T-cell (primary cell): ENCODE measurements at regions of chr6 and their contacts with region 1.

Region 1: GRCh38 chr6:52389626-52390360 is 27.8 kb downstream of the PAQR8 start:
- DNase-seq: peak; percentile 22 to 77 (median 57)
- ATAC-seq: peak; percentile 48 to 69 (median 64)
- H3K4me3 ChIP-seq: peak overlapping the region; percentile 25 to 29
- H3K4me3 Mint-ChIP-seq: peak overlapping the region; percentile 68 to 81 (median 81)
- H3K27ac ChIP-seq: peak overlapping the region; percentile 89
- H3K27ac Mint-ChIP-seq: peak overlapping the region; percentile 96 to 98
- H3K4me1 ChIP-seq: peaks cover 50 to 65% of the 10 kb centered on the region in 2 experiments
- H3K4me1 Mint-ChIP-seq: peaks cover 85 to 96% (median 92%) of the 10 kb centered on the region in 3 donors
- H3K27me3 ChIP-seq: no peaks in the 10 kb centered on the region
- H3K27me3 Mint-ChIP-seq: no peaks in the 10 kb centered on the region

Region 2: GRCh38 chr6:52304983-52305390 is 84.8 kb before region 1 on chr6:
- CTCF ChIA-PET with region 1: interaction called in 1 of 2 experiments, 10 read pairs
- POLR2A ChIA-PET with region 1: no interaction called
- DNase-seq: peak in 1 of 35 experiments; percentile 39
- ATAC-seq: peak in 2 of 4 experiments; percentile 32 to 34
- H3K4me3 ChIP-seq: no peak overlapping the region
- H3K4me3 Mint-ChIP-seq: peak overlapping the region; percentile 51 to 65 (median 54)
- H3K27ac ChIP-seq: peak overlapping the region; percentile 86
- H3K27ac Mint-ChIP-seq: peak overlapping the region; percentile 95
- H3K4me1 ChIP-seq: peaks cover 40 to 66% of the 10 kb centered on the region in 2 experiments
- H3K4me1 Mint-ChIP-seq: peaks cover 76 to 87% (median 80%) of the 10 kb centered on the region in 3 donors
- H3K27me3 ChIP-seq: no peaks in the 10 kb centered on the region
- H3K27me3 Mint-ChIP-seq: no peaks in the 10 kb centered on the region

Region 3: DNA sequence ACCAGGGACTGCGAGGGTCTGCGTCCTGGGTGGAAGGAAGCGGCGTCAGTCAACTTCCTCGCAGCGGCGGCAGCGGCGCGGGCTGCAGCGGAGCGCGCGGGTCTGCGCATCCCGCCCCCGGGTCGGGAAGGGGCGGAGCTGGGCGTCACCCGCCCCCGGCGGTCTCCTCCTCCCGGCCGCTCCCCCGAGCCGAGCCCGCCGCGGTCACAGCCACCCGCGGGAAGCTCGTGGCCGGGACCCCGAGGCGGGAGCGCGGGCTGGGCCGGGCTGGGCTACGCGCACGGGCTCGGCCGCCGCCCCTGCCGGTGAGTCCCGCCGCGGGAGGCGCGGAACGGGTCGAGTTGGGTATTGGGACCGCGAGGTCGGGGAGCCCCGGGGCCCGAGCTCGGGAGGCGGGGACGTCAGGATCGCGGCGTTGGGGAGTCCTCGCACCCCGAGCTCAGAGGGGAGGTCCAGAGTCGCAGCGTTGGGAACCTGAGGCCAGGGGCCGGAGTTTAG is 27.8 kb before region 1 on chr6 and contains the start of gene PAQR8:
- CTCF ChIA-PET with region 1: interaction called, 8 to 27 read pairs
- POLR2A ChIA-PET with region 1: interaction called, 4 to 8 read pairs
- DNase-seq: peak; percentile 60 to 91 (median 78)
- ATAC-seq: peak; percentile 91 to 96 (median 93)
- H3K4me3 ChIP-seq: peak within 1 kb of the TSS; percentile 93 to 98
- H3K4me3 Mint-ChIP-seq: peak within 1 kb of the TSS; percentile 94 to 97 (median 95)
- H3K27ac ChIP-seq: peak within 1 kb of the TSS; percentile 94
- H3K27ac Mint-ChIP-seq: peak within 1 kb of the TSS; percentile 94
- H3K4me1 ChIP-seq: peaks cover 15 to 21% of the 10 kb centered on the region in 2 experiments
- H3K4me1 Mint-ChIP-seq: peaks cover 42 to 49% (median 46%) of the 10 kb centered on the region in 3 donors
- H3K27me3 ChIP-seq: no peaks in the 10 kb centered on the region
- H3K27me3 Mint-ChIP-seq: no peaks in the 10 kb centered on the region
- total RNA-seq, gene PAQR8: 12.0 to 35.2 (median 30.2) TPM

Region 4: DNA sequence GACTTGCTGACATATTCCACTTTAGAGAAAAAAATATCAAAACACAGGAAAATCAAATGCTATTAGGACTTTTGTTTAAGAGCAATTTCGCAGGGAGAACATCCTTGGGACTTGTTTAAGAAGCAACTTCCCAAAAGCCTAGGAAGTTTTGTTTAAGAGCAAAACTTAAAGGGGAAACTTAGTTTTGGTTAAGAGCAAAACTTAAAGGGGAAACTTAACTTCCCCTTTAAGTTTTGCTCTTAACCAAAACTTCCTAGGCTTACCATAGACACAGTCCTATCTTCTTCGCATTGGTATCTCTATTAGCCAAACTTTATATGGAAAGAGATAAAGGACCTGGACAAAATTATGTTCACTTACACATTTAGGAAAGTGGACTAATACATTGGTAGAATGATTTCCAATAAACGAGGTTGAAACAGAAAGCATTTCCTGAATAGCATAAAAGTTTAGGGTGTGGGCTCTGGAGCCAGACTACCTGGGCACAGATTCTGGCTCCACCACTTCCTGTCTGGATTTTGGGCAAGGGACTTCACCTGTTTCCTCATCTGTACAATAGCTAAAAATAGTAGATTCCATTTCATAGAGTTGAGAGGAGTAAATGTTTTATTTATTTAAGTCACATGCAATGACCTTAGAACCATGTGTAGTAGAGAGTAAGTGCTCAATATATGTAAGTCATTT is 12.1 kb before region 1 on chr6:
- CTCF ChIA-PET with region 1: interaction called, 4 to 10 read pairs
- POLR2A ChIA-PET with region 1: interaction called in 1 of 2 experiments, 6 read pairs
- DNase-seq: no peak
- ATAC-seq: peak in 3 of 4 experiments; percentile 14 to 53 (median 28)
- H3K4me3 ChIP-seq: no peak overlapping the region
- H3K4me3 Mint-ChIP-seq: peak overlapping the region; percentile 32 to 54 (median 52)
- H3K27ac ChIP-seq: no peak overlapping the region
- H3K27ac Mint-ChIP-seq: peak overlapping the region; percentile 86 to 93
- H3K4me1 ChIP-seq: peaks cover 35 to 47% of the 10 kb centered on the region in 2 experiments
- H3K4me1 Mint-ChIP-seq: peaks cover 77 to 80% (median 79%) of the 10 kb centered on the region in 3 donors
- H3K27me3 ChIP-seq: no peaks in the 10 kb centered on the region
- H3K27me3 Mint-ChIP-seq: no peaks in the 10 kb centered on the region

Region 5: DNA sequence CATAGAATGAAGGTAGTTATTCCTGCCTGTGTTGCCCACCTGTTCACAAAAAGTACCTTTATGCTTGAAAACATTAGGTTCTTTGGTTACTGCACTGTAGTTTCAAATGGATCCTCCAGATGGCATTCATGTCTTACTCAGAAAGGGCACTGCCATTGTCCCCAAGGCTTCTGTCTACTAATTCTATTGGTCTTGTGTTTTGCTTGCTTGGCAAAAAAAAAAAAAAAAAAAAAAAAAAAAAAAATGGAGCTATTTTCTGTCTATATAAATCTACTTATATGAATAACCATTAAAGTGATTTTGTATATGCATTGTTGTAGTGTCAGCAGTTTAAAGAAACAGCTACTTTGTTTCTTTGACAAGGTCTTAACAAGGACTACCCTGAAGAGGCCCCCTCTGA is 17.7 kb after region 1 on chr6:
- CTCF ChIA-PET with region 1: interaction called, 10 to 88 read pairs
- POLR2A ChIA-PET with region 1: interaction called, 3 to 6 read pairs
- DNase-seq: peak in 3 of 35 experiments; percentile 22 to 63 (median 23)
- ATAC-seq: peak; percentile 61 to 86 (median 73)
- H3K4me3 ChIP-seq: no peak overlapping the region
- H3K4me3 Mint-ChIP-seq: no peak overlapping the region
- H3K27ac ChIP-seq: no peak overlapping the region
- H3K27ac Mint-ChIP-seq: peak overlapping the region; percentile 46 to 66
- H3K4me1 ChIP-seq: peaks cover 0 to 11% of the 10 kb centered on the region in 2 experiments
- H3K4me1 Mint-ChIP-seq: peaks cover 29 to 36% (median 36%) of the 10 kb centered on the region in 3 donors
- H3K27me3 ChIP-seq: no peaks in the 10 kb centered on the region
- H3K27me3 Mint-ChIP-seq: no peaks in the 10 kb centered on the region

Region 6: DNA sequence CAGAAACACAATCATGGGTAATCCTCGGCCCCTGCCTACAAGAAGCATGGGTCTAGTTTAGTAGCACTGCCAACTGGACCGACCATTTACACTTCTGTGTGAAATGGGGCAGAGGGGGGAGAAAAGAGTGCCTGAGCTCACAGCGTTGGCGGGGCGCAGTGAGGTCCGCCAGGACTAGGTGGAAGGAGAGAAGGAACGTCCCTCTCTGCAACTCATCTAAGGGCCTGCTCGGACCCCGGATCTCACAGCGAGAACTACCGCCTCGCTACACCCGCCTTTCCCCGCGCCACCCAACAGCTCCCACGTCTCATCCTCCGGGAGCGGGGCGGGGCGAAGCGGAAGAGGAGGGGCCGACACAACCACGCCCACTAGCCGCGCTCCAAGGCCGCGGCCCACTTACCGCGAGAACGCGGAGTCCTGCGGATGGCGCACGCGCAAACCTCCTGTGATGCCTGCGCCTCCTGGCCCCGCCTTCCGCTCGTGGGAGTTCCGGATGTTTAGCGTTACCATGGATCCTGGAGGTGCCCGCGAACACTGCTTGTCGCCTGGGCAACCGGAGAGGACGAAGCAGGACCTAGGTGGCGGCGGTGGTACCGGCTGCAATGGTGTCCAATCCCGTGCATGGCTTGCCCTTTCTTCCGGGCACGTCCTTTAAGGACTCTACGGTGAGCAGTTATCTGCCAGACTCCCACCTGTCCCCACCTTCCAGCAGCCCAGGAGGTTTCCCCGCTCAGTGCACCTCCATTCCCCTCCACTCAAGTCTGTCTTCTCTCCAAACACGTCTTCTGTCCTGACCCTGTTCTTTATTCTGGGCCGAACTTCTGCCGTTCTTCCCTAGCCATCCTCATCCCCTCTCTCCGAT is 30.2 kb after region 1 on chr6 and contains the start of gene EFHC1:
- CTCF ChIA-PET with region 1: interaction called, 10 to 51 read pairs
- POLR2A ChIA-PET with region 1: interaction called in 1 of 2 experiments, 4 read pairs
- DNase-seq: peak; percentile 93 to 99 (median 96)
- ATAC-seq: peak; percentile 91 to 95 (median 94)
- H3K4me3 ChIP-seq: peak within 1 kb of the TSS; percentile 60 to 67
- H3K4me3 Mint-ChIP-seq: no peak within 1 kb of the TSS
- H3K27ac ChIP-seq: peak within 1 kb of the TSS; percentile 62
- H3K27ac Mint-ChIP-seq: peak within 1 kb of the TSS in 1 of 2 donors; percentile 66
- H3K4me1 ChIP-seq: peaks cover 7 to 17% of the 10 kb centered on the region in 2 experiments
- H3K4me1 Mint-ChIP-seq: peaks cover 15 to 20% (median 15%) of the 10 kb centered on the region in 3 donors
- H3K27me3 ChIP-seq: peaks cover 0 to 8% of the 10 kb centered on the region in 2 experiments
- H3K27me3 Mint-ChIP-seq: no peaks in the 10 kb centered on the region
- total RNA-seq, gene EFHC1: 4.5 to 8.6 (median 6.2) TPM

Region 7: DNA sequence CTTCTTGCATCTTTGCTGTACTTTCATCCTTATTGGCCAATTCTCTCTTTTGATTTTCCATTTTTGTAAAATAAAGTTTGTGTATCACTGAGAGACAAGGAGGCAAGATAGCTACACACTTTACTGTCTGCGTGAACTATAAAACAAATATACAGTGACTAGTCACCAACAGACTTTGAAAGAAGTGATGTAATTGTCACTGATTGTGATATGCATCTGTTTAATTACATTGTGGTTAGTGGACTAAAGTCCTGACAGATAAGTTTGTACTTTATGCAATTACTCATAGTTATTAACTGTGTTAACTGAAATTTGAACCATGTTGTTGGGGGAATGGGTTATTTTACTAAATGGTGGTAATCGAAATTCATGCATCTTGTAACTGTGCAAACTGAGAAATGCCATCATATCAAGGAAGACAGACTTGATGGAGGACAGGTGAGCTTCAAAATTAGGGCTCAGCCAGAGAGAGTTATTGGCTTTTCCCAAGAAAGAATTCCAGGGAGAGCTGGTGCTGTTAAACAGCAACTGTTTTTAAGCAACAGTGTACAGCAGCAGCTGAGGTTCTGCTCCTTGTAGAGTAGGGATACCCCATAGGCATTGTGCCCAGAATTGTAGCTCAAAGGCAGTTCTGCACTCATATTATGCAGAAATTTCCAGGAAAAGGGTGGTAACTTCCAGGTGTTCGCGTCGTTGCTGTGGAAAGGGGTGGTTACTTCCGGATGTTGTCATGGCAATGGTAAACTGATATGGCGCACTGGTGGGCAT is 93.3 kb after region 1 on chr6:
- CTCF ChIA-PET with region 1: no interaction called
- POLR2A ChIA-PET with region 1: no interaction called
- DNase-seq: no peak
- ATAC-seq: no peak
- H3K4me3 ChIP-seq: no peak overlapping the region
- H3K4me3 Mint-ChIP-seq: no peak overlapping the region
- H3K27ac ChIP-seq: no peak overlapping the region
- H3K27ac Mint-ChIP-seq: no peak overlapping the region
- H3K4me1 ChIP-seq: no peaks in the 10 kb centered on the region
- H3K4me1 Mint-ChIP-seq: no peaks in the 10 kb centered on the region
- H3K27me3 ChIP-seq: no peaks in the 10 kb centered on the region
- H3K27me3 Mint-ChIP-seq: no peaks in the 10 kb centered on the region

Region 8: GRCh38 chr6:52881996-52882841 is 492.4 kb after region 1 on chr6:
- CTCF ChIA-PET with region 1: no interaction called
- POLR2A ChIA-PET with region 1: no interaction called
- DNase-seq: peak; percentile 21 to 73 (median 51)
- ATAC-seq: peak; percentile 96 to 99 (median 97)
- H3K4me3 ChIP-seq: peak overlapping the region; percentile 55 to 67
- H3K4me3 Mint-ChIP-seq: peak overlapping the region; percentile 80 to 82 (median 80)
- H3K27ac ChIP-seq: no peak overlapping the region
- H3K27ac Mint-ChIP-seq: peak overlapping the region; percentile 58 to 68
- H3K4me1 ChIP-seq: peaks cover 0 to 7% of the 10 kb centered on the region in 2 experiments
- H3K4me1 Mint-ChIP-seq: peaks cover 5 to 14% (median 6%) of the 10 kb centered on the region in 3 donors
- H3K27me3 ChIP-seq: peaks cover 0 to 4% of the 10 kb centered on the region in 2 experiments
- H3K27me3 Mint-ChIP-seq: no peaks in the 10 kb centered on the region

Region 9: DNA sequence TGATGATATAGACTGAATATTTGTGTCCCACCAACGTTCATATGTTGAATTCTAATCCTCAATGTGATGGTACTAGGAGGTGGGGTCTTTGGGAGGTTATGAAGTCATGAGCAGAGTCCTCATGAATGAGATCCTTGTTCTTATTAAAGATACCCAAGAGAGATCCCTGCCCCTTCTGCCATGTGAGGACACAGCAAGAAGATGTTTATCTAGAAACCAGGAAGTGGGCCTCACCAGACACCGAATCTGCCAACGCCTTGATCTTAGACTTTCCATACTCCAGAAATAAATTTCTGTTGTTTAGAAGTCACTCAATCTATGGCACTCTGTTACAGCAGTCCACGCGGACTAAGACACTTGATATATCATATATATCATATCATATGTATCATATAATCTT is 826.5 kb after region 1 on chr6:
- CTCF ChIA-PET with region 1: no interaction called
- POLR2A ChIA-PET with region 1: no interaction called
- DNase-seq: no peak
- ATAC-seq: no peak
- H3K4me3 ChIP-seq: no peak overlapping the region
- H3K4me3 Mint-ChIP-seq: no peak overlapping the region
- H3K27ac ChIP-seq: no peak overlapping the region
- H3K27ac Mint-ChIP-seq: no peak overlapping the region
- H3K4me1 ChIP-seq: peaks cover 4 to 6% of the 10 kb centered on the region in 2 experiments
- H3K4me1 Mint-ChIP-seq: peaks cover 5 to 16% (median 7%) of the 10 kb centered on the region in 3 donors
- H3K27me3 ChIP-seq: no peaks in the 10 kb centered on the region
- H3K27me3 Mint-ChIP-seq: no peaks in the 10 kb centered on the region